Heart right ventricle (tissue), 16 donors: ENCODE measurements at regions of chr1 and their contacts with region 1.

Region 1: DNA sequence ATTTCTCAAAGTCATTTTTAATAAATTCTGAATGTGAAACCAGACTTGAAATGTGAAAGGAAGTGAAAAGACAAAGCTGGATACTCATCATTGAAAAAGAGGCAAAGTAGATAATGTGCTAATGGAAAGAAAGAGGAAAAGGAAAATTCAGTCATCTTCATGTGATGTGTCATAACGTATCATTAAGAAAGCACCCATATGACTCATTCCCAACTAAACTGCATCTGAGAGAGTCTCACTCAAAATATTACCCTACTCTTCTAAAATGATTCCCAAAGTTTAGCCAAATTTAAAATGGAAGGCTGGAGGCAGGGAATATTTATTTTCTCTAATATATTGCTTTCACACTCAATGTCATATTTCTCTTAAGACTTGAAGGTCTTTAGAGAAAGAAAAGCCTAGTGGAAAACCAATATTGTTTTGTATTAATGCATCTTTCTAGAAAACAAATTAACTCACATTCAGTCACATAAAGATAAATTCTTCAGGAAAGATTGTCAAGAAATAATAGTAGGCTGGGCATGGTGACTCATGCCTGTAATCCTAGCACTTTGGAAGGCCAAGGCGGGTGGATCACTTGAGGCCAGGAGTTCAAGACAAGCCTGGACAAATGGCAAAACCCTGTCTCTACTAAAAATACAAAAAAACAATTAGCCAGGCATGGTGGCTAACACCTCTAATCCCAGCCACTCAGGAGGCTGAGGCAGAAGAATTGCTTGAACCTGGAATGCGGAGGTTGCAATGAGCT is 129.9 kb downstream of the SLC30A10 start:
- DNase-seq: no peak
- ATAC-seq: peak in 1 of 8 donors; percentile 55
- H3K4me3 ChIP-seq: no peak overlapping the region
- H3K27ac ChIP-seq: peak overlapping the region in 1 of 10 donors; percentile 38
- H3K4me1 ChIP-seq: peaks cover 0 to 6% (median 0%) of the 10 kb centered on the region in 9 donors
- H3K27me3 ChIP-seq: no peaks in the 10 kb centered on the region
- CTCF ChIP-seq: no peak

Region 2: DNA sequence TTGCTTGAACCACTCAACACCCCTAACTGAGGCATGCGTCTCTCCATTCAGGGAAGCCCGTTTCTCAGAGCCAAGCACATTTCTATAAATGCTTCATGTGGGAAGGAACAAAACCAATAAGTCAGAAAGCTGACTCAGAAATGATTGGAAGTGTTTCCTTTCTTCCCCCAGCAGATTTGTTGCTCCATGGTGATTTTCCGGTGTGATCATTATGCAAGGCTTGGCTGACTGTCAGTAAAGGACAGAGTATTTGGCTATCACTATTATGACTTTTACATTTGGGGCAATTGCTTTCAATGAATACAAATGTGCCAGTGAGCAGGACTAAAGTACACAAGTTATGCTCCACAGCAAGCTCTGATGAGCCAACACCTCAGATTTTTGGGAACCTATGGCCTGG is 132.2 kb before region 1 on chr1:
- intact Hi-C with region 1: loop called in 4 of 10 experiments (anchors 5 to 10 kb)
- DNase-seq: no peak
- ATAC-seq: peak in 1 of 8 donors; percentile 74
- H3K4me3 ChIP-seq: no peak overlapping the region
- H3K27ac ChIP-seq: peak overlapping the region in 2 of 10 donors; percentile 29 to 40
- H3K4me1 ChIP-seq: peaks cover 7 to 33% (median 24%) of the 10 kb centered on the region in 9 donors
- H3K27me3 ChIP-seq: no peaks in the 10 kb centered on the region
- CTCF ChIP-seq: no peak

Region 3: GRCh38 chr1:219710529-219711194 is 87.8 kb before region 1 on chr1:
- intact Hi-C with region 1: no loop called
- DNase-seq: no peak
- ATAC-seq: no peak
- H3K4me3 ChIP-seq: no peak overlapping the region
- H3K27ac ChIP-seq: no peak overlapping the region
- H3K4me1 ChIP-seq: peaks cover 0 to 8% (median 0%) of the 10 kb centered on the region in 9 donors
- H3K27me3 ChIP-seq: peaks cover 0 to 3% (median 0%) of the 10 kb centered on the region in 7 donors
- CTCF ChIP-seq: no peak